ENCODE measurements at regions of chr20 and their contacts with region 1.

Region 1: GRCh38 chr20:44747166-44748004 is 1.7 kb downstream of the KCNK15 start:
- DNase-seq: peak; percentile 84

Region 2: GRCh38 chr20:44388466-44389023 is 358.8 kb before region 1 on chr20:
- CTCF ChIA-PET with region 1: no interaction called
- POLR2A ChIA-PET with region 1: no interaction called
- DNase-seq: peak; percentile 83

Region 3: DNA sequence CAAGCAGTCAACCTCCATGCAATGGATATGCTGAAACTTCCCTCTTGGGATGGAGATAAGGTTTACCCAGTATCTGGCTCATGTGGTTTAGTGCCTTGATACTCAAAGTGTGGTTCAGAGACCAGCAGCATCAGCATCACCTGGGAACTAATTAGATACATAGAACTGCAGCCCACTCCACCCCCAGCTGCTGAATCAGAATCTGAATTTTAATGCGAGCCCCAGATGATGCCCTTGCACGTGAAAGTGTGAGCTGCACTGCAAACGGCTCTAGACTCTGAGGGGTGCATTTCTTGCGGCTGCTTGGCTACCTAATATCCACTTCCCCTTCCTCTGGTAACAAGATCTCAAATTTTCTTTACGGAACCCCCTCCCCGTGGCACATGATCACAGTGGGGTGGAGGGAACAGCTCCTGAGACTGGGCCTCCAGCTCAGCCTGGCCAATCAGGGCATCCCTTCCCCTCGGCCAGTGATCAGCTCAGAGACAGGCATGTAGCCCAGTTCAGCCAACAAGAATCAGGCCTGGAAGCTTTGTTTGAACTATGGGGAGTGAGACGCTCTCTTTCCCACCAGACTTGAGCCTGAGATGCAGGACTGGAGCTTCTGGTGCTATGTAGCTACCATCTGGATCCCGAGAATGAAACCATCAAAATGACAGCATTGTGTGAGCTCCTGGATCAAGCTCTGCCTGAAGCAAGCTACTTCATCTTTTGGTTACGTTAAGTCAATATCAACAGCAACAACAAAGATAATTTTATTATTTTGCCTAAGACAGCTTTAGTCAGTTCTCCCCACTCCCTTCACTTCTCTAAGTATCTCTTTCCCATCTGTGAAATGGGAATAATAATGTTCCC is 11.1 kb after region 1 on chr20:
- CTCF ChIA-PET with region 1: interaction called, 12 read pairs
- POLR2A ChIA-PET with region 1: no interaction called
- DNase-seq: no peak

Region 4: DNA sequence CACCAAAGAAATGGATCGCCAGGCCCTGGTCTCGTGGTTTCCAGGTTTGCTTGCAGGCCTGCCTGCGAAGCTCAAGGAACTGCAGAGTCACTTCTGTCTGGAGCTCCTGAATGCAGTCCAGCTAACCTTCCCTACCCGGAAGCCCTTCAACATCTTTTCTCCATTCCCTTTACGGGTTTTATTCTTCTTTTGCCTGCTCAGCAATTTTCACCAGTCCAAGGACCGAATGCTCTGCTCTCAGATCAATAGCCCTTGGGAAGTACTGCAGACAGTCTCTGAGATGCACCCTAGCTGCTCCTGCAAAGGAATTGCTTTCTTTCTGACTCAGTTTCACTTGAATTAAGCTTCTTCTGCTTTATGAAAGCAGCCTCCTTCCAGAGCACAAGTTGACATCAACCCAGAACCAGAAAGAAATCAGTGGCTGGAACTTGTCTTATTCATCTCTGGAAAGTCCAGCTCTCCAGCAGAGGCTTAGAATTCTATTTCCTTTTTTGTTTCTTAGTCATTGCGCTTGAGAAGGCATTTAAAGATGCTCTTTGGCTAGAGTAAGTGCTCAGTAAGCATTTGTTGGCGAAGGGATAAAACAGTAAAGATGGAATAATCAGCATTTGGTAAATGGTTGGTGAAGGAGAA is 119.4 kb after region 1 on chr20:
- CTCF ChIA-PET with region 1: interaction called, 11 read pairs
- POLR2A ChIA-PET with region 1: interaction called, 3 read pairs
- DNase-seq: no peak